Activated CD4-positive, alpha-beta T cell treated with anti-CD3 and anti-CD28 coated beads, Interleukin-2, amount 10 ng/mL, durations not matched to agents 24 days and 14 days (primary cell): ENCODE measurements at regions of chr15 and their contacts with region 1.

Region 1: GRCh38 chr15:85412956-85413854 is 32.8 kb downstream of the AKAP13 start:
- DNase-seq: peak; percentile 91
- H3K4me3 Mint-ChIP-seq: peak overlapping the region; percentile 65
- H3K27ac Mint-ChIP-seq: peak overlapping the region; percentile 81
- H3K4me1 Mint-ChIP-seq: peaks cover 50% of the 10 kb centered on the region
- H3K27me3 Mint-ChIP-seq: no peaks in the 10 kb centered on the region

Region 2: DNA sequence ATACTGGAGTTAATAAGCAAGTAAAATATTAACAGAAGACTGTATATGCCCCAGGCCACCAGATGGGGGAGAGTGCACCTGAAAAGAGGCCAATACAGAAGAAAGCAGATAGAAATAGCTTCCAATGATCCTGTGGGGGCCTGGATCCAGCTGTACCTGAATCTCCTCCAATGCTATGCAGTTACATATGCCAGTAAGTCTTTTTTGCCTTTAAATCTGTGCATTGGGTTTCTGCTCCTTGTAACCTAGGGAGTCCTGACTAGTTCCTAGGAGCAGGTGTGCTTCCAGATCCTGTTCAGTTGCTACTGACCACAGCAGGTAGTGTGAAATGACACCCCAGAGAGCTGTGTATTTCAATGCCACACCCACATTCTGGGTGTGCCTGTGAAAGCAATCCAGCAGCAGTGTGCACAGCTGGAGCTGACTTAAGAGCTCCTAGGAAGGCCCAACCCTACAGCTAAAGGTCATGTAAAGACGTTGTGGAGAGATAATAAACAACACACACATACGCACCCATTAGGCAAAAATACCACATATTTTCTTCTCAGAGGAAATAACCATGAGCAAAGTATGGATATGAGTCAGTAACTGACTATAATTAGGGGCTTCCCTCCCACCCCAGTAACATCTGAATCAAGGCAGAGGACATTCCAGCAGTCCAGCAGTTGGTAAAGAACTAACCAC is 95.0 kb before region 1 on chr15:
- intact Hi-C with region 1: loop called (anchors 2 kb)
- DNase-seq: peak; percentile 83
- H3K4me3 Mint-ChIP-seq: peak overlapping the region; percentile 64
- H3K27ac Mint-ChIP-seq: peak overlapping the region; percentile 86
- H3K4me1 Mint-ChIP-seq: peaks cover 55% of the 10 kb centered on the region
- H3K27me3 Mint-ChIP-seq: no peaks in the 10 kb centered on the region

Region 3: DNA sequence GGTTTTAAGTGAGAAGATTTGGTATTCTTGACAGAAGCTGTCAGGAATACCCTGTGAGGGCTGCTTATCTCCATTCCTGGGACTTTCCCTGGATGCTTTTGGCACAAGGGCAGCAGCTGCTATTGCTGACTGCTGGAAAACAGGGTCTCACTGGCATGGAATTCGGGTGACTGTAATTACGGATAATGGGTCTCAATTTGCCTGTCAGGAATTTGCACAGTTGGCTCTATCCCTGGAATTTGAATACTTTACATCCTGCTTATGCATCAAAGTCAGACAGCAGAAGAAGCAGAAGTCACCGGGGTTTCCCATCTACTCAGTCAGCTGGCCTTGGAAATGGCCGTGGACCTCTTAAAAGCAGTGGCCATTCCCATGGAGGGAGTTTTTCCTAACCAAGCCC is 58.7 kb before region 1 on chr15:
- intact Hi-C with region 1: loop called (anchors 2 kb)
- DNase-seq: no peak
- H3K4me3 Mint-ChIP-seq: no peak overlapping the region
- H3K27ac Mint-ChIP-seq: no peak overlapping the region
- H3K4me1 Mint-ChIP-seq: peaks cover 9% of the 10 kb centered on the region
- H3K27me3 Mint-ChIP-seq: peaks cover 3% of the 10 kb centered on the region

Region 4: DNA sequence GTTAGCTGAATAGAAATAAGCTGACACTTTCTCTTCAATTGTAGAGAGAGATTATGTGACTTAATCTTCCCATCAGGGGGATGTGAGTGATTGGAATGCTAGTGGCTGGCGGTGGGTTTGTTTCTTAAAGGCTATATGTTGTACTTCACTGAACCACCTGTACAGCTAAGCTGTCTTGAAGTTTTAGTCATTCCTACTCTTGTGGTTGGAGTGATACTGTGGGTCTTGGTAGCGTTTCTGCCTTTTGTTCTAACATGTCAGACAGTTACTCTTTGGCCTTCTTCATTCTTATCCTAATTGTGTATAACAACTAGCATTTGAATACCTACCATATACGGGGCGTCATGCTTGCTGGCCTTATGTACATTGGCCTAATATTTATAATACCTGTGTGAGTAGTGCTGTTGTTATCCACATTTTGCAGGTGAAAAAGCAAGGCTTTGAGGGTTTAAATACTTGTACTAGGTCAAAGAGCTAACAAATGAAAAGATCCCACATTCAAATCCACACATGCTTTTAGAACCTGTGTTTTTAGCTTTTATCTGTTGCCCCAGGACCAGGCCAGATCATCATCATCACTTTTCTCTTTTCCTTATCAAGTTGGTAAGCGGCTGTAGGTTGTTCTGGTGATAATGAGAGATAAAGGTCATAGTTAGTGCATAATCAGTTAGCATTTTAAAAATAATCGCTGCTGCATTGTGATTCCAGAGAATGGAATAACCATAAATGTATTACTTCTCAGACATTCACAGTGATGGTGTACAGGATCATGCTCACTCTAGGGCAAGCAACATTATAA is 17.4 kb after region 1 on chr15:
- intact Hi-C with region 1: loop called (anchors 2 kb)
- DNase-seq: no peak
- H3K4me3 Mint-ChIP-seq: no peak overlapping the region
- H3K27ac Mint-ChIP-seq: peak overlapping the region; percentile 53
- H3K4me1 Mint-ChIP-seq: peaks cover 15% of the 10 kb centered on the region
- H3K27me3 Mint-ChIP-seq: no peaks in the 10 kb centered on the region

Region 5: DNA sequence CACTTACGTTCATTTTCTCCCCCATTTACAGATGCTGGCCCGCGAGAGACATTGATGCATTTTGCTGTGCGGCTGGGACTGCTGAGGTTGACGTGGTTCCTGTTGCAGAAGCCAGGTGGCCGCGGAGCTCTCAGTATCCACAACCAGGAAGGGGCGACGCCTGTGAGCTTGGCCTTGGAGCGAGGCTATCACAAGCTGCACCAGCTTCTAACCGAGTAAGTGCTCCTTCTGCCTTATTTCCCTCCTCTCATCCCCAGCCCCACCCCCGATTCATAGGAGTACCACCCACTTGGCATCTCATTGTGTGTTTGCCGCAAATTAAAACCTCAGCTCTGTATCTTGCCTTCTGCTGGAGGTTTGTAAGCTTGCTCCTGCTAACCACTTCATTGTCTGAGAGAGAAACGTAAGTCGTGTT is 130.5 kb after region 1 on chr15:
- intact Hi-C with region 1: loop called (anchors 5 kb)
- DNase-seq: peak; percentile 82
- H3K4me3 Mint-ChIP-seq: peak overlapping the region; percentile 74
- H3K27ac Mint-ChIP-seq: peak overlapping the region; percentile 64
- H3K4me1 Mint-ChIP-seq: peaks cover 75% of the 10 kb centered on the region
- H3K27me3 Mint-ChIP-seq: no peaks in the 10 kb centered on the region

Region 6: DNA sequence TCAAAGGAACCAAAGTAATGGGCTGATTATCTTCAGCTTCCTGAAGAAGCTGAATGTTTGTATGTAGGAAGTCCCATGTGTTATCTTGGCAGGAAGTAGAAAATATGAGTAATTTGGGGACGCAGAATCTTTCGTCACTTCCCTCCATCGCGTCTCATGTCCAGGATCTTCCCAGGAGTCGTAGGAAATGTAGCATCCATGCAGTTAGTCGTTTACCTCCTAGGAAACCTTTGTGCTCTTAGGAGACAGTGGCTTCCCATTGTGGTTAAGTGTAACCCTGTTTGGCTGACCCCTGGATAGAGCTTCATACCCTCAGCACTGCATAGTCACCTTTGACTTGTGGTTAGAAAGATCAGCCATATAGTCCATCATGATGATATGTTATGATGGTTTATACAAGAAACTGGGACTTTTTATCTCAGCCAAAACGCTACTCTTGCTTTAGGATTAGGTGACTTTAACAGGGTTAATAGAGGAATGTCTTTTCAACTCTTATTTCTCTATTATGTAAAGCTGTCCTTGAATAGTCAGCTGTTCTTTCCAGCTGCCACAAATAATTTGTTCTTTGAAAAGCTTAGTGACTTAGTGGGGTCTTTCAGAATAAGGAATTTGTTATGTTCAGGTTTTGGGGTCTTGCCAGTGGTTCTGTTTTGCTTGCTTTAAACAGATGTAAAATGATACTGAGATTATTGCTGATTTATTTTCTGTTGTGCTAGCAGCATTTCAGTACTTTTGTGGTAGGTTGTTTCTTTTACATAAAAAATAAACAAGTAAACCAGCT is 289.3 kb after region 1 on chr15:
- intact Hi-C with region 1: loop called (anchors 2 kb)
- DNase-seq: peak; percentile 82
- H3K4me3 Mint-ChIP-seq: peak overlapping the region; percentile 76
- H3K27ac Mint-ChIP-seq: peak overlapping the region; percentile 94
- H3K4me1 Mint-ChIP-seq: peaks cover 56% of the 10 kb centered on the region
- H3K27me3 Mint-ChIP-seq: no peaks in the 10 kb centered on the region